Mammary epithelial cell (primary cell): ENCODE measurements at regions of chr1 and their contacts with region 1.

Region 1: GRCh38 chr1:52748119-52748518 is 21.9 kb downstream of the ZYG11B start:
- DNase-seq: no peak
- H3K4me3 ChIP-seq: no peak overlapping the region
- H3K27ac ChIP-seq: no peak overlapping the region
- H3K4me1 ChIP-seq: no peaks in the 10 kb centered on the region
- H3K27me3 ChIP-seq: no peaks in the 10 kb centered on the region
- CTCF ChIP-seq: peak; percentile 16 to 32

Region 2: DNA sequence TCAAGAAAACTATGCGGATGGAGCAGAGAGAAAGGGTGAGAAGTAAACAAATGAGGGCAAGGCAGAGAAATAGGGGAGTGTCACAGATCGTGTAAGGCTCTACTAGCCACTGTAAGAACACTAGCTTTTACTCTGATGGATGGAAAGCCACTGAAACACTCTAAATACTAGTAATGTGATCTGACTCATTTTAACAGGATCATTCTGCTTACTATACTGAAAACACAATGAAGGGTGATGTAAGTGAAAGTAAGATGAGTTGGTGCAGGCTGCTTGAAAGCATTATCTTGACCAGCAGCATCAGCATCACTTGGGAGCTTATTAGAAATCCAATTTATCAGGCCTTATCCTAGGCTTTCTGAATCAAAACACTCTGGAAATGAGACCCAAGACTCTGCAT is 228.0 kb before region 1 on chr1:
- CTCF ChIA-PET with region 1: no interaction called
- dilution Hi-C with region 1: no loop called
- in situ Hi-C with region 1: no loop called
- intact Hi-C with region 1: no loop called
- DNase-seq: peak; percentile 18
- H3K4me3 ChIP-seq: no peak overlapping the region
- H3K27ac ChIP-seq: no peak overlapping the region
- H3K4me1 ChIP-seq: no peaks in the 10 kb centered on the region
- H3K27me3 ChIP-seq: no peaks in the 10 kb centered on the region
- CTCF ChIP-seq: no peak

Region 3: GRCh38 chr1:52920791-52921291 is 172.7 kb after region 1 on chr1:
- CTCF ChIA-PET with region 1: no interaction called
- dilution Hi-C with region 1: no loop called
- in situ Hi-C with region 1: no loop called
- intact Hi-C with region 1: loop called (anchors 5 kb)
- DNase-seq: peak; percentile 9
- H3K4me3 ChIP-seq: peak overlapping the region; percentile 67 to 79 (median 70)
- H3K27ac ChIP-seq: peak overlapping the region; percentile 26
- H3K4me1 ChIP-seq: peaks cover 8% of the 10 kb centered on the region
- H3K27me3 ChIP-seq: no peaks in the 10 kb centered on the region
- CTCF ChIP-seq: no peak